ENCODE measurements at regions of chr1 and their contacts with region 1.

Region 1: GRCh38 chr1:185448591-185449186 is 131.6 kb upstream of the IVNS1ABP start:
- DNase-seq: no peak
- H3K4me3 ChIP-seq: no peak overlapping the region
- H3K27ac ChIP-seq: no peak overlapping the region
- H3K4me1 ChIP-seq: no peaks in the 10 kb centered on the region
- H3K27me3 ChIP-seq: no peaks in the 10 kb centered on the region
- CTCF ChIP-seq: no peak
- EP300 ChIP-seq: no peak
- POLR2A ChIP-seq: no peak
- RAD21 ChIP-seq: no peak

Region 2: GRCh38 chr1:185435695-185436379 is 12.9 kb before region 1 on chr1:
- CTCF ChIA-PET with region 1: interaction called, 13 read pairs
- POLR2A ChIA-PET with region 1: interaction called, 3 read pairs
- DNase-seq: no peak
- H3K4me3 ChIP-seq: no peak overlapping the region
- H3K27ac ChIP-seq: no peak overlapping the region
- H3K4me1 ChIP-seq: no peaks in the 10 kb centered on the region
- H3K27me3 ChIP-seq: no peaks in the 10 kb centered on the region
- CTCF ChIP-seq: no peak
- EP300 ChIP-seq: no peak
- POLR2A ChIP-seq: no peak
- RAD21 ChIP-seq: no peak